Esophagus muscularis mucosa (tissue), 4 donors: ENCODE measurements at regions of chr7 and their contacts with region 1.

Region 1: GRCh38 chr7:158782761-158783401 is 46.4 kb downstream of the ESYT2 start:
- DNase-seq: no peak
- H3K4me3 ChIP-seq: peak overlapping the region; percentile 1 to 36 (median 30)
- H3K27ac ChIP-seq: peak overlapping the region; percentile 80 to 89 (median 86)
- H3K4me1 ChIP-seq: peaks cover 44 to 96% (median 80%) of the 10 kb centered on the region in 4 donors
- H3K27me3 ChIP-seq: no peaks in the 10 kb centered on the region
- CTCF ChIP-seq: peak; percentile 52 to 70 (median 68)
- EP300 ChIP-seq: peak; percentile 87
- POLR2A ChIP-seq: no peak

Region 2: GRCh38 chr7:158567153-158567603 is 215.7 kb before region 1 on chr7:
- intact Hi-C with region 1: no loop called
- DNase-seq: no peak
- H3K4me3 ChIP-seq: no peak overlapping the region
- H3K27ac ChIP-seq: no peak overlapping the region
- H3K4me1 ChIP-seq: peaks cover 0 to 8% (median 0%) of the 10 kb centered on the region in 4 donors
- H3K27me3 ChIP-seq: peaks cover 0 to 85% (median 14%) of the 10 kb centered on the region in 4 donors
- CTCF ChIP-seq: no peak
- EP300 ChIP-seq: no peak
- POLR2A ChIP-seq: no peak

Region 3: DNA sequence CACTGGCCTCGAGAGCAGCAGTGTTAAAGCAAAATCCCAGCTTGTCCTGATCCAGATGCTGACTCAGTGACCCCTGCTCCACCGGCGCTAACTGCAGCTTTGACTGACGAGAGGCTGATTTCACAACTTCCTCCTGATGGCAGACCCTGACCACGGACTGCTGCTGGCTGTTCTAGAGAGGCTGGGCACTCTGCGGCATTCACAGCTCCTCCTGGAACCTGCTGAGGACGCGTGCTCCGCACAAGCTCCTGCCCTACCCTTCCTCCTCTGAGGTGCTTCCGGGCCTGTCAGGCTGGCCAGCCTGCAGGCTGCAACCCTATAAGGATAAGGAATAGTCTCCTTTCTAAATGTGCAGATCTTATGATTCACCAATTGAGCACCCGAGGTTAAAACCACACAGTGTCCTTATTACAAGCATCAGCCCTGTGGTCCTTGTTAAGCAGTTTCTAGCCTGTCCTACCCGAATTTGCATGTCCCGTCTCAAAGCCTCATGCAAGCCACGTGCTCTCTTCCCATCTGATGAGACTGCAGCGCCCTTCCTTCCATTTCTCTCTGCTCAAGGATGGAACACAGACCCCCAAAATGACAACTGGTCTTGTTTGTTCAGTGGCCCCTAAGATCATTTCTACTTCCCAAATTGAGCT is 42.7 kb before region 1 on chr7:
- intact Hi-C with region 1: loop called (anchors 5 kb)
- DNase-seq: peak; percentile 93
- H3K4me3 ChIP-seq: peak overlapping the region; percentile 1 to 29 (median 21)
- H3K27ac ChIP-seq: peak overlapping the region; percentile 81 to 87 (median 87)
- H3K4me1 ChIP-seq: peaks cover 0 to 34% (median 28%) of the 10 kb centered on the region in 4 donors
- H3K27me3 ChIP-seq: no peaks in the 10 kb centered on the region
- CTCF ChIP-seq: no peak
- EP300 ChIP-seq: no peak
- POLR2A ChIP-seq: no peak

Region 4: DNA sequence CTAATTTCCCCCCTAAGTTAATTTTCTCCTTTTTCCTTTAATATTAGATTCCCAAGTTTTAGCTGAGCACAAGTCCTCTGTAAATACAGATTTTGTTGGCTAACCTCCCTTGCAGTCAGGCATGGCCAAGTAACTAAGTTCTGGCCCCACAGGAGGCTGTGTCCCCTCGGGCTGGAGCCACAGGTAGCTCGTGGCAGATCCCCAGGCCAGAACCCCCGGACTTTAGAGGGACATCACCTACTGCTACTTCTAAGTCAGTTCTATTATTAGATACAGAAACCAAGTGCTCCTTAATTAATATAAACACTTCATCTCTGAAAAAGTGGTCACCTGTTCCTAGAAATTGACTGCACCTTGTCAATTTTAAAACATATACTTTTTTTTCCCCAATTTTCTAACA is 32.2 kb before region 1 on chr7:
- intact Hi-C with region 1: no loop called
- DNase-seq: no peak
- H3K4me3 ChIP-seq: no peak overlapping the region
- H3K27ac ChIP-seq: peak overlapping the region in 3 of 4 donors; percentile 12 to 40 (median 33)
- H3K4me1 ChIP-seq: peaks cover 0 to 17% (median 9%) of the 10 kb centered on the region in 4 donors
- H3K27me3 ChIP-seq: no peaks in the 10 kb centered on the region
- CTCF ChIP-seq: no peak
- EP300 ChIP-seq: no peak
- POLR2A ChIP-seq: no peak

Region 5: GRCh38 chr7:158829342-158830210 is 46.7 kb after region 1 on chr7 and contains the start of gene ESYT2:
- intact Hi-C with region 1: loop called (anchors 2 kb)
- DNase-seq: peak; percentile 99
- H3K4me3 ChIP-seq: peak within 1 kb of the TSS; percentile 95 to 98 (median 97)
- H3K27ac ChIP-seq: peak within 1 kb of the TSS; percentile 99 to 100 (median 100)
- H3K4me1 ChIP-seq: peaks cover 26 to 41% (median 39%) of the 10 kb centered on the region in 4 donors
- H3K27me3 ChIP-seq: no peaks in the 10 kb centered on the region
- CTCF ChIP-seq: peak in 2 of 3 experiments; percentile 24 to 34
- EP300 ChIP-seq: peak; percentile 96
- POLR2A ChIP-seq: peak; percentile 95
- total RNA-seq, gene ESYT2: 166 to 235 (median 202) TPM